HepG2 (cell line): ENCODE measurements at regions of chr4 and their contacts with region 1.

Region 1: GRCh38 chr4:168183717-168184608 is 91.6 kb downstream of the ANXA10 start:
- DNase-seq: peak; percentile 14
- ATAC-seq: no peak
- H3K4me3 ChIP-seq: no peak overlapping the region
- H3K27ac ChIP-seq: no peak overlapping the region
- H3K4me1 ChIP-seq: no peaks in the 10 kb centered on the region
- H3K27me3 ChIP-seq: no peaks in the 10 kb centered on the region
- CTCF ChIP-seq: peak; percentile 60
- EP300 ChIP-seq: no peak
- POLR2A ChIP-seq: no peak
- RAD21 ChIP-seq: no peak

Region 2: GRCh38 chr4:168585168-168586091 is 401.5 kb after region 1 on chr4:
- CTCF ChIA-PET with region 1: no interaction called
- POLR2A ChIA-PET with region 1: no interaction called
- in situ Hi-C with region 1: no loop called
- intact Hi-C with region 1: loop called (anchors 1 kb)
- DNase-seq: peak; percentile 20
- ATAC-seq: peak; percentile 100
- H3K4me3 ChIP-seq: no peak overlapping the region
- H3K27ac ChIP-seq: no peak overlapping the region
- H3K4me1 ChIP-seq: no peaks in the 10 kb centered on the region
- H3K27me3 ChIP-seq: peaks cover 0 to 3% of the 10 kb centered on the region in 2 experiments; a peak in 1 of 5 replicates
- CTCF ChIP-seq: peak; percentile 65
- EP300 ChIP-seq: no peak
- POLR2A ChIP-seq: no peak
- RAD21 ChIP-seq: peak; percentile 46; the same call in 1 of the 2 replicates

Region 3: DNA sequence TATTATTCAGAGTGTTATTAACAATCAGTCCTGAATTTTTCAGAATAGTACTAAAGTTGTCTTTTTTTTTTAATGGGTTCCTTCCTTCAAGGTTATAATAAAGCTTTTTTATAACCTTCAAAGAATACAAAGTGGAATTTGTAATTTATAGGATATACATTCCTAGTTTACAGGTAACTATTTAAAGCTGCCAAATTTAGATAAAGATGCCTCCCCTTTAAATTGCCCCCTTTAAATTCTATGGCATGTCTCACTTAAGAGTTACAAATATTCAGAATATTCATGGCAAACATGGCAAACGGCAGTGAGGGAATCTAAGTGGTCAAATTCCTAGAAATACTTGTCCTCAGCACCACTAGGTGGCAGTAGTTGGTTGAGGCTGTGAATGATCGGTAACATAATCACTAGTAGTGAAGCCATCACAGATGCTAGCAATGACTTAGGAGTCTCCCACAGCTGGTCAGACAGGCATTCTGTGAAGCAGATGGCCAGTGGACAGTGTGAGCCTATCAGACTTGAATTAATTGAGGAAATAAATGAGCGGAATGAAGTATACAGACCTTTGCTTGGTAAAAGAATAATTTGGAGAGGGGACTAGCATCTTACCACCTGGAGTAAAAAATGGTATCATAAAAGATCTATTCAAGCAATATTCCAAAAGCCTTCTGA is 739.7 kb after region 1 on chr4:
- CTCF ChIA-PET with region 1: no interaction called
- POLR2A ChIA-PET with region 1: no interaction called
- in situ Hi-C with region 1: loop called (anchors 25 kb)
- intact Hi-C with region 1: no loop called
- DNase-seq: peak; percentile 62
- ATAC-seq: peak; percentile 76
- H3K4me3 ChIP-seq: no peak overlapping the region
- H3K27ac ChIP-seq: no peak overlapping the region
- H3K4me1 ChIP-seq: peaks cover 30% of the 10 kb centered on the region
- H3K27me3 ChIP-seq: no peaks in the 10 kb centered on the region
- CTCF ChIP-seq: peak; percentile 89
- EP300 ChIP-seq: no peak
- POLR2A ChIP-seq: no peak
- RAD21 ChIP-seq: peak; percentile 72

Region 4: GRCh38 chr4:169566021-169566818 is 1382.3 kb after region 1 on chr4:
- CTCF ChIA-PET with region 1: no interaction called
- POLR2A ChIA-PET with region 1: no interaction called
- in situ Hi-C with region 1: no loop called
- intact Hi-C with region 1: loop called (anchors 5 kb)
- DNase-seq: peak; percentile 43
- ATAC-seq: peak; percentile 80
- H3K4me3 ChIP-seq: no peak overlapping the region
- H3K27ac ChIP-seq: no peak overlapping the region
- H3K4me1 ChIP-seq: no peaks in the 10 kb centered on the region
- H3K27me3 ChIP-seq: no peaks in the 10 kb centered on the region
- CTCF ChIP-seq: peak; percentile 50
- EP300 ChIP-seq: no peak
- POLR2A ChIP-seq: no peak
- RAD21 ChIP-seq: 0 out of 2 replicates have a peak, but pooled peaks have one; percentile 9

Region 5: GRCh38 chr4:169745291-169745690 is 1561.3 kb after region 1 on chr4:
- CTCF ChIA-PET with region 1: no interaction called
- POLR2A ChIA-PET with region 1: no interaction called
- in situ Hi-C with region 1: no loop called
- intact Hi-C with region 1: no loop called
- DNase-seq: no peak
- ATAC-seq: no peak
- H3K4me3 ChIP-seq: no peak overlapping the region
- H3K27ac ChIP-seq: no peak overlapping the region
- H3K4me1 ChIP-seq: no peaks in the 10 kb centered on the region
- H3K27me3 ChIP-seq: no peaks in the 10 kb centered on the region
- CTCF ChIP-seq: no peak
- EP300 ChIP-seq: no peak
- POLR2A ChIP-seq: no peak
- RAD21 ChIP-seq: no peak